ENCODE measurements at regions of chr10 and their contacts with region 1.

Region 1: DNA sequence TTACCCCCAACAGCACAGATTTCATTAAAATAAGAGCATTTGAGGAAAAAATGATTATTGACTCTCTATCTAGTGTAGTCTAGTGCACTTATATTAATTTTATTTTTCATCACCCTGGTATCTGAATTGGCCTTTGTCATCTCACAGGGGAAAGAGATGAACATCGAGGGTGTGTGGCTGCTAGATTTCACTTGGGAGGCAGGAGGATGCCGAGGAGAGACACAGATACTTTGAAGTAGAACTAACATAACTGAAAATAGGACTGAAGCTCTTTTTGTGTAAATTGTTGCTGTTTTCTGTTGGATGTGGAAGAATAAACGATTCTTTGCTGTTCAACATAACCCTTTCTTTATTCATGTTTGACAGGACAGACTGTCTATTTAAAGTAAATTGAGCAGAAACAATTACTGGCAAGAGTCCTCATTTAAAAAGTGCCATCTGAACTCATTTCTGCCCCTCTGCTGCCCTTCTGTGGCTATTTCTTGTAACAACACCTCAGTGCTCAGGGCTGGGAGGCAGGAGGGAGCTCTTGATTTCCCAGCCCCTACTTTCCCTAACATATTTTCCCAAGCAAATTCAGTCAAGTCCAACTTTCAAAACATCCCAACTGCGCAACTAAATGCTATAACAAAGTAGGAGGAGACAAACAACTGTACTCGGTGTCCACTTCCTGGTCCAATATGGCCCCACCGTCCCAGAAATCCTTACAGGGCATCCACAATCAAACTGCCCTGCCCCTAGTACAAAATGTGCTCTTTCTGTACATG is 15.6 kb downstream of the LYZL1 start:
- DNase-seq: no peak
- ATAC-seq: peak; percentile 83
- H3K4me3 ChIP-seq: no peak overlapping the region
- H3K27ac ChIP-seq: no peak overlapping the region
- H3K4me1 ChIP-seq: no peaks in the 10 kb centered on the region
- H3K27me3 ChIP-seq: no peaks in the 10 kb centered on the region

Region 2: DNA sequence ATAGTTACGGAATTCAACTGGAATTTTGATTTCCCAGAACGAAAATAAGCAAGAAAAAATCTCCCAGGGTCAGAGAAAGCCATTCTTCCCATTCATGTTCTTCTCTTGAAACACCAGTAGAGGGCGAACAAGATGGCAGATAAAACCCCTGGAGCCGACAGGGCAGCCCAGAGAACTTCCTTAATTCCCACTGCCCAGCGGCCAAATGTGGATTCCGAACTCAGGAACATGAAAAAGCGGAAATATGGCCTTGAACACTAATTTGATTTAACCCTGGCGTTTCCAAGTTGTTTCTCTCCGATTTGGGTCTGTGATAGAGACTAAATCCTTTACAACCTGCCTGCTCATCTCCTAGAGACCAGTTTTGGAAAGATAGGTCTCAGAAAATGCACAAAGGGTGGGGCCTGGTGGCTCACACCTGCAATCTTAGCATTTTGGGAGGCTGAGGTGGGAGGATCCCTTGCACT is 872.2 kb before region 1 on chr10:
- intact Hi-C with region 1: loop called in 1 of 2 experiments (anchors 5 kb)
- DNase-seq: peak in 1 of 2 donors; percentile 70
- ATAC-seq: peak; percentile 88
- H3K4me3 ChIP-seq: no peak overlapping the region
- H3K27ac ChIP-seq: no peak overlapping the region
- H3K4me1 ChIP-seq: no peaks in the 10 kb centered on the region
- H3K27me3 ChIP-seq: no peaks in the 10 kb centered on the region

Region 3: GRCh38 chr10:28628184-28628893 is 676.1 kb before region 1 on chr10:
- intact Hi-C with region 1: loop called (anchors 2 kb)
- DNase-seq: peak; percentile 88 to 94
- ATAC-seq: peak; percentile 89
- H3K4me3 ChIP-seq: no peak overlapping the region
- H3K27ac ChIP-seq: no peak overlapping the region
- H3K4me1 ChIP-seq: no peaks in the 10 kb centered on the region
- H3K27me3 ChIP-seq: no peaks in the 10 kb centered on the region

Region 4: GRCh38 chr10:28663576-28664313 is 640.7 kb before region 1 on chr10:
- intact Hi-C with region 1: loop called (anchors 1 to 2 kb)
- DNase-seq: peak; percentile 88 to 89
- ATAC-seq: peak; percentile 94
- H3K4me3 ChIP-seq: no peak overlapping the region
- H3K27ac ChIP-seq: no peak overlapping the region
- H3K4me1 ChIP-seq: no peaks in the 10 kb centered on the region
- H3K27me3 ChIP-seq: no peaks in the 10 kb centered on the region

Region 5: DNA sequence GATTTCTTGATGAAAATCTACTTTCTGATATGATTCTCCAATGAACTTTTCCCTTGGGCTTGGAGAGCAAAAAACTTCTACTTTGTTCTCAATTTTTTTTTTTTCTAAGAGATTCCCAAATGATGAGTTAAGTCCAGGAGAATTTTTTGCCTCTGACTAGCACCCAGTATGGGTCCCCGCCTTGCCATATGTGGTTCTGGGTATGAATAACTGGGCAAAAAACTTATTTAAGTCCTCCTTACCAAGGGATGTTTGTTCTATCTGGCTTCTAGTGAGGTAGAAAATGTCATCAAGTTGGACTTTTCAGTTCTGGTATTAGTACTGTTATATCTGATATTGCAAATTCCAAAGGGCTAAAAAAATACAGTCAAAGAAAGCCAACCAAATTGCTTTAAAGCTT is 163.4 kb before region 1 on chr10:
- intact Hi-C with region 1: loop called in 1 of 2 experiments (anchors 10 kb)
- DNase-seq: no peak
- ATAC-seq: no peak
- H3K4me3 ChIP-seq: no peak overlapping the region
- H3K27ac ChIP-seq: peak overlapping the region in 1 of 2 donors; percentile 49
- H3K4me1 ChIP-seq: no peaks in the 10 kb centered on the region
- H3K27me3 ChIP-seq: no peaks in the 10 kb centered on the region

Region 6: GRCh38 chr10:29344073-29344820 is 39.8 kb after region 1 on chr10:
- intact Hi-C with region 1: no loop called
- DNase-seq: no peak
- ATAC-seq: peak; percentile 17
- H3K4me3 ChIP-seq: no peak overlapping the region
- H3K27ac ChIP-seq: no peak overlapping the region
- H3K4me1 ChIP-seq: no peaks in the 10 kb centered on the region
- H3K27me3 ChIP-seq: no peaks in the 10 kb centered on the region

Region 7: DNA sequence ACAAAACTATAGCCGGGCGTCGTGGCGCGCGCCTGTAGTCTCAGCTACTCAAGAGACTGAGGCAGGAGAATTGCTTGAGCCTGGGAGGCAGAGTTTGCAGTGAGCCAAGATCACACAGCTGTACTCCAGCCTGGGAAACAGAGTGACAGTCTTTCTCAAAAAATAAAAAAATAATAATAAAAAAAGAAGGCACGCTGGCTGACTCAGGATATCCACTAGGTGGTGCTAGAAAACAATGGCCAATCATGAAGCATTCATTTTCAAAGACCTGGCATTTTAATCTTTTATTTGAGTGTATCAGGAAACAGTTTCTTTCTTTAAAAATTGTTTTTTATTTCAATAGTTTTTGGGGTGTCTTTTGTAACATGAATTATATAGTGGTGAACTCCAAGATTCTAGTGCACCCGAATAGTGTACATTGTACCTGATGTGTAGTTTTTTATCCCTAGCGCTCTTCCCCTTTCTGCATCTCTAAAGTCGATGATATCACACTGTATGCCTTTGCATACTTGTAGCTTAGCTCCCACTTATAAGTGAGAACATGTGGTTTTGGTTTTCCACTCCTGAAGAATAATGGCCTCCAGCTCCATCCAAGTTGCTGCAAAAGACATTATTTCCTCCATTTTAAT is 73.0 kb after region 1 on chr10:
- intact Hi-C with region 1: no loop called
- DNase-seq: no peak
- ATAC-seq: no peak
- H3K4me3 ChIP-seq: no peak overlapping the region
- H3K27ac ChIP-seq: no peak overlapping the region
- H3K4me1 ChIP-seq: no peaks in the 10 kb centered on the region
- H3K27me3 ChIP-seq: no peaks in the 10 kb centered on the region

Measured in aorta (tissue), 5 donors.